CD8-positive, alpha-beta T cell (primary cell): ENCODE measurements at regions of chr12 and their contacts with region 1.

Region 1: GRCh38 chr12:121626087-121626852 is at the start of gene ORAI1:
- DNase-seq: peak; percentile 91 to 98 (median 96)
- ATAC-seq: peak; percentile 67
- H3K4me3 ChIP-seq: peak within 1 kb of the TSS; percentile 69 to 70
- H3K4me3 Mint-ChIP-seq: peak within 1 kb of the TSS; percentile 94
- H3K27ac ChIP-seq: peak within 1 kb of the TSS; percentile 73 to 89
- H3K27ac Mint-ChIP-seq: peak within 1 kb of the TSS; percentile 97
- H3K4me1 ChIP-seq: peaks cover 44% of the 10 kb centered on the region
- H3K4me1 Mint-ChIP-seq: peaks cover 46% of the 10 kb centered on the region
- H3K27me3 ChIP-seq: no peaks in the 10 kb centered on the region
- H3K27me3 Mint-ChIP-seq: no peaks in the 10 kb centered on the region
- CTCF ChIP-seq: no peak
- total RNA-seq, gene ORAI1: 59.0 to 62.1 TPM

Region 2: GRCh38 chr12:121124402-121125098 is 501.7 kb before region 1 on chr12:
- CTCF ChIA-PET with region 1: no interaction called
- POLR2A ChIA-PET with region 1: no interaction called
- intact Hi-C with region 1: no loop called
- DNase-seq: no peak
- ATAC-seq: no peak
- H3K4me3 ChIP-seq: no peak overlapping the region
- H3K4me3 Mint-ChIP-seq: no peak overlapping the region
- H3K27ac ChIP-seq: no peak overlapping the region
- H3K27ac Mint-ChIP-seq: no peak overlapping the region
- H3K4me1 ChIP-seq: peaks cover 30% of the 10 kb centered on the region
- H3K4me1 Mint-ChIP-seq: peaks cover 58% of the 10 kb centered on the region
- H3K27me3 ChIP-seq: no peaks in the 10 kb centered on the region
- H3K27me3 Mint-ChIP-seq: no peaks in the 10 kb centered on the region
- CTCF ChIP-seq: no peak

Region 3: DNA sequence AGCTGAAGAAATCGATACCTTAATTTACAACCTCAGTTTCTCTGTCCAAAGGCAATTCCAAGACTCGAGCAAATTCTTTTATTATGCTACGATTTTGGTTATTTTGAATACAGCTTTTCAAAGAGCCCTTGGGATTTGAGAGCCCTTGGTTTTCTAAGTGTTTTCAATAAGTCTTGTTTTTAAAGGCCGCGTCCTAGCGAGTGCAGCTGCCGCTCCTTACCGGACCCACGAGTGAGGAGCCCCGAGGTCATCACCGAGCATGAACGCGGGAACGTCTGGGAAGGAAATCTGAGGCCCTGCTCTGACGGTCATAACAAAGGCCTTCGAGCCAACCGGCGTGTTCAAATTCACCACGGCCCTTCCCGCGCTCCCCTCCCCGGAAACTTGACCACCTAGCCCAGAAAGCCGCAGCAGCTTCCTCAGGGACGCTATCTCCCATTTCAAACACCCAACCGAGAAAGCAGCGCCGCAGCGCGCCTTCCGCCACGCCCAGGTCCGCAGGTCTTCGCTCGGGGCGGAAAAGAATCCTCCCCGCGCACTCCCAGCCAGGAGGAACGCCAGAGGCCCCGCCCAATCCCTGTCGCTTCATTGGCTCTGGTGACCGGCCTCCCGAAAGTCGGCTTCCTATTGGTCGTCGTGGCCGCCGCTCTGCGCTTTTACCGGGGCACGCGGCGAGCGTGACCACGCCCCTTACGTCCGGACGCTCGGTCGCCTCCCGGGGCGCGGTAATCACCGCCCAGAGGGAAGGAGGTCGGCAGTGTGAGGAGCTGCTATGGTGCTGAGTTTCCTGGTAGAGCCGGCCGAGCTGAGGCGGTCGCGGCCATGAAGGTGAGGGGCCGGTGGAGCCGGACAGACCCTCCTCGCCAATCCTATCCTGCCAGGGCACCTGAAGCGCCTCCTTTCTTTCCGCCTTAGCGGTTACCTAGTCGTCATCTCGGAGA is 226.6 kb before region 1 on chr12 and contains the start of gene RNF34:
- CTCF ChIA-PET with region 1: interaction called, 3 read pairs
- POLR2A ChIA-PET with region 1: interaction called, 4 read pairs
- intact Hi-C with region 1: loop called in 1 of 2 experiments (anchors 10 kb)
- DNase-seq: peak; percentile 95 to 99 (median 97)
- ATAC-seq: peak; percentile 87
- H3K4me3 ChIP-seq: peak within 1 kb of the TSS; percentile 78 to 89
- H3K4me3 Mint-ChIP-seq: peak within 1 kb of the TSS; percentile 86
- H3K27ac ChIP-seq: peak within 1 kb of the TSS; percentile 78 to 90
- H3K27ac Mint-ChIP-seq: peak within 1 kb of the TSS; percentile 97
- H3K4me1 ChIP-seq: peaks cover 28% of the 10 kb centered on the region
- H3K4me1 Mint-ChIP-seq: peaks cover 33% of the 10 kb centered on the region
- H3K27me3 ChIP-seq: no peaks in the 10 kb centered on the region
- H3K27me3 Mint-ChIP-seq: no peaks in the 10 kb centered on the region
- CTCF ChIP-seq: no peak
- total RNA-seq, gene RNF34: 46.8 to 51.3 TPM

Region 4: DNA sequence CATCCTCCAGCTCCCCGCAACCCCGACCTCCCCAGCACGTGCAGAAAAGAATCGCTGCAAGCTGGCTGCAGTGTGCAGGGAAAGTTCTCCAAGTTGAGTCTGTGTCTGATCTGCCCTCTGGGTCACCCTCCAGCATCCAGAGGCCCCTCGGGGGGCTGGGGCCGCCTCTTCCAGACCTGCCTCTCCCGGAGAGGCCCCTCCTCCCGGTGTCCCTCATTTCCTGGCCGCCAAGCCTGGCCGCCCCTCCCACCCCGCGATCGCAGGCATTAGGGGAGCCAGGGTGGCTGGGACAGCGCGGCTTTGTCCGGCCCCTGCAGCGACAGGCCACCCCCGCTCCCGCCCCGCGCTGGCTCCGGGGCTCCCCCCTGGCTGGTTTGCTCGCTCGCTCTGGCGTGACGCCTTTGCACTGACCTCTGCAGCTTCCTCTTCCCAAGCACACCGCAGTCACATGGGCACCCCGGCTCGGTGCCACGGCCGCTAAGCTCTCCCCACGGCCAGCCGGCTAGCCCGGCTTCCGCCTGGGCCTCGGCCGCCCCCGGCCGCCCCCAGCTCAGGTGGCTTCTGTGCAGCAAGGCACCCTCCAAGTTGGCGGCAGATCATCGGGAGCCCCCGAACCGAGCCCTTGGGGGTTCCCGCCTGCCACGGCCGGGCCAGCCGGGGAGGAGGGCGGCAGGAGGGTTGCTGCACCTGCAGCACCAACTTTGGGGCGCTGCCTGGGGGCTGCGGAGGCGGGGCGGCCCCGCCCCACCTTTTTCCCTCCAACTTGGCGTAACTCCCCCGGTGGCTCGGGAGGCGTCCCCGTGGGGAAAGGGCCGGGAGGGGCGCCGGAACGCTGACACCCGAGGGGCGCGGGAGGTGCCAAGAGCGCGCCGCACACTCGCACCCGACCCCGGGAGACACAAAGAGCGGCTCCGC is 89.1 kb before region 1 on chr12:
- CTCF ChIA-PET with region 1: interaction called, 3 read pairs
- POLR2A ChIA-PET with region 1: interaction called, 4 read pairs
- intact Hi-C with region 1: loop called in 1 of 2 experiments (anchors 2 kb)
- DNase-seq: peak in 8 of 9 experiments; percentile 22 to 83 (median 58)
- ATAC-seq: peak; percentile 5
- H3K4me3 ChIP-seq: peak overlapping the region; percentile 52 to 68
- H3K4me3 Mint-ChIP-seq: peak overlapping the region; percentile 80
- H3K27ac ChIP-seq: peak overlapping the region; percentile 80 to 83
- H3K27ac Mint-ChIP-seq: peak overlapping the region; percentile 96
- H3K4me1 ChIP-seq: peaks cover 34% of the 10 kb centered on the region
- H3K4me1 Mint-ChIP-seq: peaks cover 43% of the 10 kb centered on the region
- H3K27me3 ChIP-seq: no peaks in the 10 kb centered on the region
- H3K27me3 Mint-ChIP-seq: no peaks in the 10 kb centered on the region
- CTCF ChIP-seq: no peak

Region 5: GRCh38 chr12:121590476-121591143 is 35.7 kb before region 1 on chr12:
- CTCF ChIA-PET with region 1: interaction called, 9 read pairs
- POLR2A ChIA-PET with region 1: interaction called, 13 read pairs
- intact Hi-C with region 1: loop called (anchors 1 kb)
- DNase-seq: peak in 8 of 9 experiments; percentile 37 to 92 (median 75)
- ATAC-seq: peak; percentile 75
- H3K4me3 ChIP-seq: peak overlapping the region; percentile 44 to 57
- H3K4me3 Mint-ChIP-seq: peak overlapping the region; percentile 89
- H3K27ac ChIP-seq: peak overlapping the region; percentile 95 to 96
- H3K27ac Mint-ChIP-seq: peak overlapping the region; percentile 100
- H3K4me1 ChIP-seq: peaks cover 30% of the 10 kb centered on the region
- H3K4me1 Mint-ChIP-seq: peaks cover 33% of the 10 kb centered on the region
- H3K27me3 ChIP-seq: no peaks in the 10 kb centered on the region
- H3K27me3 Mint-ChIP-seq: no peaks in the 10 kb centered on the region
- CTCF ChIP-seq: no peak

Region 6: DNA sequence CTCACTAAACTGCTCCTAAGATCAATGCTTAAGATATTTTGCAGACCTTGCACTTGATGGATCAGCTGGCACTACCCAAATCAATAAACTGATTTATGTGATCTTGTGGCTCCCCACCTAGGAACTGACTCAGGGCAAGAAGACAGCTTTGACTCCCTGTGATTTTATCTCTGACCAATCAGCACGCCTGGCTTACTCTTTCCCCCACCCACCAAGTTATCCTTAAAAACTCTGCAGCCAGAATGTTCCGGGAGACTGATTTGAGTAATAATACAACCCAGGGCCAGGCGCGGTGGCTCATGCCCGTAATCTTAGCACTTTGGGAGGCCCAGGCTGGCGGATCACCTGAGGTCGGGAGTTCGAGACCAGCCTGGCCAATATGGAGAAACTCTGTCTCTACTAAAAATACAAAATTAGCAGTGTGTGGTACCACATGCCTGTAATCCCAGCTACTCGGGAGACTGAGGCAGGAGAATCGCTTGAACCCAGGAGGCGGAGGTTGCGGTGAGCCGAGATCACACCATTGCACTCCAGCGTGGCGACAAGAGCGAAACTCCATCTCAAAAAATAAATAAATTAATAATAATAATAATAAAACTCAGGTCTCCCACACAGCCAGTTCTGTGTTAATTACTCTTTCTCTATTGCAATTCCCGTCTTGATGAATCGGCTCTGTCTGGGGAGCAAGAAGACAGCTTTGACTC is 31.2 kb after region 1 on chr12:
- CTCF ChIA-PET with region 1: interaction called, 13 read pairs
- POLR2A ChIA-PET with region 1: interaction called, 20 read pairs
- intact Hi-C with region 1: no loop called
- DNase-seq: no peak
- ATAC-seq: no peak
- H3K4me3 ChIP-seq: no peak overlapping the region
- H3K4me3 Mint-ChIP-seq: no peak overlapping the region
- H3K27ac ChIP-seq: peak overlapping the region in 1 of 2 experiments; percentile 19
- H3K27ac Mint-ChIP-seq: peak overlapping the region; percentile 97
- H3K4me1 ChIP-seq: peaks cover 43% of the 10 kb centered on the region
- H3K4me1 Mint-ChIP-seq: peaks cover 66% of the 10 kb centered on the region
- H3K27me3 ChIP-seq: no peaks in the 10 kb centered on the region
- H3K27me3 Mint-ChIP-seq: no peaks in the 10 kb centered on the region
- CTCF ChIP-seq: no peak

Region 7: DNA sequence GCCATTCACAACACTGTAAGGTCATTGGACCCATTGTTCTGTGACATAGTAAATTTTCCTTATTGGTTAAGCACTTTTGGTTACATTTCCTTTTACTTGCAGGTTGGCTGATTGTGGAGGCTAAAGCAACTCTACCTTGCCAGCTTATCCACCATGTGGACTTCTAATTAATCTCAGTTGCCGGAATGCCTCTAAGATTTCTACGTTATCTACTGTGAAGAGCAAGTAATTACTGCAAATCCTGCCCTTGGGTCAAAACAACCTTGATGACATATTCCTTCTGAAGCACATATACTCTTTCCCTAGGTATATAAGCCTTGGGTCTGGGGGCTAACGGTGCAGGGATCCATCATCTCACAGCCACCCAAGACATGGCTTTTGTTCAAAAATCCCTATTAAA is 62.7 kb after region 1 on chr12:
- CTCF ChIA-PET with region 1: interaction called, 35 read pairs
- POLR2A ChIA-PET with region 1: interaction called, 10 read pairs
- intact Hi-C with region 1: loop called (anchors 1 kb)
- DNase-seq: no peak
- ATAC-seq: no peak
- H3K4me3 ChIP-seq: no peak overlapping the region
- H3K4me3 Mint-ChIP-seq: no peak overlapping the region
- H3K27ac ChIP-seq: no peak overlapping the region
- H3K27ac Mint-ChIP-seq: no peak overlapping the region
- H3K4me1 ChIP-seq: peaks cover 5% of the 10 kb centered on the region
- H3K4me1 Mint-ChIP-seq: peaks cover 8% of the 10 kb centered on the region
- H3K27me3 ChIP-seq: no peaks in the 10 kb centered on the region
- H3K27me3 Mint-ChIP-seq: no peaks in the 10 kb centered on the region
- CTCF ChIP-seq: no peak